H1 (cell line): ENCODE measurements at regions of chr2 and their contacts with region 1.

Region 1: GRCh38 chr2:54763636-54764291 is 40.3 kb downstream of the EML6 start:
- DNase-seq: peak in 1 of 2 experiments; percentile 60
- H3K4me3 ChIP-seq: no peak overlapping the region
- H3K27ac ChIP-seq: no peak overlapping the region
- H3K4me1 ChIP-seq: no peaks in the 10 kb centered on the region
- H3K27me3 ChIP-seq: no peaks in the 10 kb centered on the region
- CTCF ChIP-seq: peak; percentile 62 to 86 (median 85)
- EP300 ChIP-seq: no peak
- POLR2A ChIP-seq: no peak
- RAD21 ChIP-seq: peak; percentile 81 to 83

Region 2: DNA sequence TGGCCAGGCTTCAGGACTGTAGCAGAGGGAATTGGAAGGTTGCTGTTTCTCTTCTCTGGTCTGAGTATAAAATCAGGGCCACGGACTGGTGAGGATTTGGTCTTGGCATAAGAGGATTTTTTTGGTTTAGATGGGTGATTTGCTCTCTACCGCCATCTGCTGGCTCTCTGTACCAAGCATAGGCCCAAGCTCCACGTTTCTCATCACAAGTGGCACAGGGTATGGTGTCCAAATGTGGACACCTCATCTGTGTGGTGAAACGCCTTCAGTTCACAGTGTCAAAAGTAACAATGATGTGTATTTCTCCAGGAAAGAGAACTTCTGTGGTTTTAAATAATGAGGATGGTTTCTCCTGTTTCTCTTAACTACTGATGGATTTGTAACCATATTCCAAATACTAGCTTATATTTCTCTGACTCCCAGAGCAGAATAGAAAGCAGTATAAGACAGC is 74.8 kb after region 1 on chr2:
- CTCF ChIA-PET with region 1: interaction called, 31 read pairs
- POLR2A ChIA-PET with region 1: no interaction called
- DNase-seq: peak; percentile 27 to 81
- H3K4me3 ChIP-seq: no peak overlapping the region
- H3K27ac ChIP-seq: no peak overlapping the region
- H3K4me1 ChIP-seq: no peaks in the 10 kb centered on the region
- H3K27me3 ChIP-seq: no peaks in the 10 kb centered on the region; a peak in 2 of 7 replicates
- CTCF ChIP-seq: peak; percentile 69 to 88 (median 78)
- EP300 ChIP-seq: no peak
- POLR2A ChIP-seq: no peak
- RAD21 ChIP-seq: peak; percentile 68 to 76